ENCODE measurements at regions of chr20 and their contacts with region 1.

Region 1: DNA sequence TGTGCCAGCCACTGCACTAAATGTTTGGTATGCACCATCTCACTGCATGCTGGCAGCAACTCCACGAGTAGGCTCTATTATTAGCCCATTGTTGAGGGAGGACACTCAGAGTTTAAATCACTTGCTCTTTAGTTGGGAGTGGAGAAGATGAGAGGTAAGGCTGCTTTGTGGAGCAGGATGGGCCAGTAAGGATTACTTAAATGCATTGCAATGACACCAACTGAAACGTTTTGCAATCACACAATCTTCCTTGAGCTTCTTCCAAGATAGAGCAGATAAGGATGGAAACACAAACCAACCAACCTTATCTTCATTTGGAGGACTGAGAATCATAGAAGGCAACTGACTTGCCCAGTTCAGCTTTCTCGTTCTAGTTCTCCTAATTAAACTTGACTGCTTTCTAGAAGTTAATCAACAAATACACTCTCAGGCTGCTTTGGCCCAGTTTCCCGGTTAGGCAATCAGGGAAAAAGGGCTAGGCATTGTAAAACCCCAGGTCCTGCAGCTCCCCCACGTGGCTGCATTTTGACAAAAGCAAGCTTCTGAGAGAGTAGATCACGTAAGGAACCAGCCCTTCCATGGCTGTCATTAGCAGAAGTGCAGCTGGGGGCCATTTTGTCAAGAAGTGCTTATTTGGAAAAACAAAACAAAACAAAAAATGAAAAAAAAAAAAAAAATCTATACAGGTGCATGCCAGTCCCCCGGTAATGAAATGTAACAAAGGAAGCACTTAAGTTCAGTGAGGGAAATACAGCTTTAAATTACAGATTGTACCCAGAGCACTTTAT is 130.6 kb downstream of the BCAS1 start:
- DNase-seq: peak; percentile 91 to 97 (median 92)
- ATAC-seq: peak; percentile 90 to 95 (median 93)
- H3K4me3 ChIP-seq: peak overlapping the region in 6 of 12 donors; percentile 13 to 31 (median 20)
- H3K27ac ChIP-seq: peak overlapping the region in 11 of 12 donors; percentile 68 to 91 (median 77)
- H3K4me1 ChIP-seq: peaks cover 0 to 76% (median 36%) of the 10 kb centered on the region in 12 donors
- H3K27me3 ChIP-seq: no peaks in the 10 kb centered on the region
- CTCF ChIP-seq: peak; percentile 62 to 86 (median 82)
- POLR2A ChIP-seq: no peak

Region 2: DNA sequence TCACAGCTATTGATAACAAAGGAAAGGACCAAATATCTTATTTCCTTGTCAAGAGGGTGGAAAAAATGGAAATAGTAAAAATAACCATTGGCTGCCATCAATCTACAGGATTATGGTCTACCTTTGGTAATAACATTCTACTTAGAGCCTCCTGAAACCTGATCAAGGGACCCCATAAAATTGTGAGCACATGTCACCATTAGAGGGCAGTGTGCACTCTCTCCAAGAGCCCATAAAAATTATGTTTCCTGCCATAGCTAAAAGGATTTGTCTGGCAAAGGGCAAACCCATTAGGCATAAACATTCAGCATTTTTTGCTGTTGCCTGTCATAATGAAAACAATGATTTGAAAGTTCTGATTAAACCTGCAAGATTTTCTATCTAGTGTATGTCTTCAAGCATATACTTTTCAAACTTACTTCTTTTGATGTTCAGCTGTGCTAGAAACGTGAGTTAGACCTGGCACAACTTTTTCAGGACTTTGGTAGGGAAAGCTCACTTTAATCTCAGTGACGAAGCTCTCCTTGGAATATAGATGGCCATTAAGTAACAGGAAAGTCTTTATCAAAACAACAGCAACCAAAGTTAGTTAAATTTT is 1627.5 kb before region 1 on chr20:
- intact Hi-C with region 1: loop called in 1 of 10 experiments (anchors 10 kb)
- DNase-seq: peak in 2 of 5 donors; percentile 25 to 29
- ATAC-seq: peak in 3 of 4 donors; percentile 56 to 67 (median 64)
- H3K4me3 ChIP-seq: no peak overlapping the region
- H3K27ac ChIP-seq: no peak overlapping the region
- H3K4me1 ChIP-seq: peaks cover 0 to 9% (median 0%) of the 10 kb centered on the region in 12 donors
- H3K27me3 ChIP-seq: peaks cover 0 to 7% (median 0%) of the 10 kb centered on the region in 9 donors
- CTCF ChIP-seq: peak; percentile 55 to 84 (median 71)
- POLR2A ChIP-seq: no peak

Region 3: GRCh38 chr20:53413186-53413631 is 526.6 kb before region 1 on chr20:
- intact Hi-C with region 1: loop called in 1 of 10 experiments (anchors 10 kb)
- DNase-seq: peak in 1 of 5 donors; percentile 66
- ATAC-seq: peak in 1 of 4 donors; percentile 11
- H3K4me3 ChIP-seq: no peak overlapping the region
- H3K27ac ChIP-seq: no peak overlapping the region
- H3K4me1 ChIP-seq: peaks cover 0 to 17% (median 6%) of the 10 kb centered on the region in 12 donors
- H3K27me3 ChIP-seq: no peaks in the 10 kb centered on the region
- CTCF ChIP-seq: peak in 2 of 12 donors; percentile 9 to 11
- POLR2A ChIP-seq: no peak

Region 4: GRCh38 chr20:53738039-53738944 is 201.5 kb before region 1 on chr20:
- intact Hi-C with region 1: loop called in 1 of 10 experiments (anchors 10 kb)
- DNase-seq: peak; percentile 55 to 73 (median 68)
- ATAC-seq: peak; percentile 59 to 88 (median 86)
- H3K4me3 ChIP-seq: peak overlapping the region in 9 of 12 donors; percentile 0 to 29 (median 12)
- H3K27ac ChIP-seq: peak overlapping the region in 11 of 12 donors; percentile 47 to 82 (median 67)
- H3K4me1 ChIP-seq: peaks cover 3 to 64% (median 40%) of the 10 kb centered on the region in 12 donors
- H3K27me3 ChIP-seq: no peaks in the 10 kb centered on the region
- CTCF ChIP-seq: no peak
- POLR2A ChIP-seq: no peak

Region 5: GRCh38 chr20:53828682-53829254 is 111.0 kb before region 1 on chr20:
- intact Hi-C with region 1: no loop called
- DNase-seq: peak in 3 of 5 donors; percentile 29 to 53 (median 39)
- ATAC-seq: peak; percentile 74 to 88 (median 84)
- H3K4me3 ChIP-seq: peak overlapping the region in 10 of 12 donors; percentile 13 to 45 (median 32)
- H3K27ac ChIP-seq: peak overlapping the region; percentile 74 to 93 (median 86)
- H3K4me1 ChIP-seq: peaks cover 0 to 48% (median 13%) of the 10 kb centered on the region in 12 donors
- H3K27me3 ChIP-seq: no peaks in the 10 kb centered on the region
- CTCF ChIP-seq: peak in 3 of 12 donors; percentile 26 to 35 (median 27)
- POLR2A ChIP-seq: no peak

Region 6: DNA sequence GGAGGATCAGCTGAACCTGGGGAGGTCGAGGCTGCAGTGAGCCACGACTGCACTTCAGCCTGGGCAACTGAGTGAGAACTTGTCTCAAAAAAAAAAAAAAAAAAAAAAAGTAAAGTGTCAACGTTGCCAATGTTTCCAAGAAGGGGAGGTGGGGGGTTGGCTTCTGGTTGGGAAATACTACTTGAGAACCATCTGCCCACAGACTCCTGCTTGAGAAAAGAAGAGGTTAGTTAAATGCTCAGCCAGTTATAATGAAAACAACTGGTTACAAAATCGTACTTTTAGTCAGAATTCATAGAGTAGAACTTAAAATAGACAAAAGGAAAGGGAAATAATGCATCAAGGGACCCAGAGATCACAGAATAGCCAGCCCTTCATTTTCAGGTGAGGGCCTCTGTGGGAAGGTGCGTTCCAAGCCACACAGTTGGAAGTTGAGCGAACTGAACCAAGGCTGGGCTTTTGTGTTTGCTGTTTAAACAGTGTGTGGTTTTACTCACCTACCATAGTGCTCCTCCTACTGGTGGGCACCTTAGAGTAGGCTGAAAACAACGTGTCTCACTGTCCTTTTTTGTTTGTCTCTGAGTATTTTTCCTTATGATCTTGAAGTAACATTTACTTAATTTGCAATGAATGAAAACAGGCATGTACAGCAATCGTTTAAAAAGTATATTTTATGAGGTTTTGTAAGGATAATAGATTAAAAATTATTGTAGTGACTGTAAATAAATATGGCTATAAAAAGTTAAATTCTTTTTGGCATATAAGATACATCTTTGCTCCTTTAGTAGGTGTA is 70.1 kb before region 1 on chr20:
- intact Hi-C with region 1: loop called in 1 of 10 experiments (anchors 5 kb)
- DNase-seq: peak in 4 of 5 donors; percentile 54 to 67 (median 61)
- ATAC-seq: peak; percentile 72 to 94 (median 87)
- H3K4me3 ChIP-seq: peak overlapping the region in 1 of 12 donors; percentile 13
- H3K27ac ChIP-seq: peak overlapping the region in 4 of 12 donors; percentile 20 to 65 (median 52)
- H3K4me1 ChIP-seq: peaks cover 0 to 62% (median 22%) of the 10 kb centered on the region in 12 donors
- H3K27me3 ChIP-seq: no peaks in the 10 kb centered on the region
- CTCF ChIP-seq: peak; percentile 60 to 86 (median 76)
- POLR2A ChIP-seq: no peak

Region 7: GRCh38 chr20:53915446-53916172 is 24.2 kb before region 1 on chr20:
- intact Hi-C with region 1: loop called in 5 of 10 experiments (anchors 1 to 2 kb)
- DNase-seq: peak; percentile 94 to 97 (median 95)
- ATAC-seq: peak; percentile 86 to 92 (median 90)
- H3K4me3 ChIP-seq: peak overlapping the region; percentile 53 to 80 (median 66)
- H3K27ac ChIP-seq: peak overlapping the region; percentile 79 to 94 (median 88)
- H3K4me1 ChIP-seq: peaks cover 0 to 46% (median 29%) of the 10 kb centered on the region in 12 donors
- H3K27me3 ChIP-seq: no peaks in the 10 kb centered on the region
- CTCF ChIP-seq: peak; percentile 79 to 98 (median 88)
- POLR2A ChIP-seq: no peak

Region 8: DNA sequence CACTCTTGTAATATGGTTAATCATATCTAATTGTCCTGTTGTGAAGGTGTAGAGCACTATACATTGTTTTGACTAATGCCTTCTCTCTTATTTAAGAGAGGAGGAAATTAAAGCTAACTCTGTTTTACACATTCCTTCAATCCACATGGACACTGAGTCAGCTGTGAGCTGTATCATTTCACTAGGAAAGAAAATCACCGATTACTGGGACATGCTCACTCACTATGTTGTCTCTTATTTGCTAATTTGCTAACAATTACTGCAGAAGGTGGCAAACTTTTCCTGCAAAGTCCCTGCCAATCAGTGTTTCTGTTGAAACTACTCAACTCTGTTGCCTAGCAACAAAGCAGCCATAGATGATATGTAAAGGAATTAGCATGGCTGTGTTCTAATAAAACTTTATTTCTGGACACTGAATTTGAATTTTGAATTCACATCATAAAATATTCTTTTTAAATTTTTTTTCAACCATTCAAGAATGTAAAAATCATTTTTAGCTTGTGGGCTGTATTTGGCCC is 32.5 kb after region 1 on chr20:
- intact Hi-C with region 1: no loop called
- DNase-seq: no peak
- ATAC-seq: no peak
- H3K4me3 ChIP-seq: no peak overlapping the region
- H3K27ac ChIP-seq: no peak overlapping the region
- H3K4me1 ChIP-seq: no peaks in the 10 kb centered on the region
- H3K27me3 ChIP-seq: no peaks in the 10 kb centered on the region
- CTCF ChIP-seq: no peak
- POLR2A ChIP-seq: no peak

Region 9: GRCh38 chr20:53984356-53985149 is 44.8 kb after region 1 on chr20:
- intact Hi-C with region 1: no loop called
- DNase-seq: peak in 1 of 5 donors; percentile 29
- ATAC-seq: no peak
- H3K4me3 ChIP-seq: no peak overlapping the region
- H3K27ac ChIP-seq: no peak overlapping the region
- H3K4me1 ChIP-seq: no peaks in the 10 kb centered on the region
- H3K27me3 ChIP-seq: peaks cover 0 to 16% (median 0%) of the 10 kb centered on the region in 9 donors
- CTCF ChIP-seq: no peak
- POLR2A ChIP-seq: no peak

Region 10: DNA sequence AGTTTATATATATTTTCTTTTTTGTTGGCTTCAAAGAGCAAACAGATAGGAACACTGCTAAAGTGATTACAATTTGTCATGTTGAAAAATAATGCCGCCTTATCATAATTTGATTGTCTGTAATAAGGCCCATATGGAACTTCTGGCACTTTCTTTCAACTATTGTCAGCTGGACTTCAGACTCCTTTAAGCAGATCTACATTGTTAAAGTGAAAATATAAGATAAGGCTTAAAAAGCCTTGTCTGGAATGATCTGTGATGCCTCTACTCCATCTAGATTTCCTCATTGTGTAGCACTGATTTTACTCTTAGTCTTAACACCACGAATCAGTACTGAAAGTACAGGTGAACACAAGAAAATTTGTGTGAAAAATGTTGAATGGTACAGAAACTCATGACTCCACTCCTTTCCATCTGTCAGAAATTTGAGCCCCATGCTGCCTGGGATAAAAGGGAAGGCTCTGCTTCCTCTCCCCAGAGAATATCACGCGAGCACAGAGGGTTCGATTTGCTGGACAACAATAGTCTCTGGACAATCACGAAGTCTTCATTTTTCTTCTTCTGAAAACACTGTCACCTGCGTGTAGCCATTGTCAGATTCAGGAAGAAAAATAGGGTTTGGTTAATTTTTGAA is 74.6 kb after region 1 on chr20:
- intact Hi-C with region 1: no loop called
- DNase-seq: no peak
- ATAC-seq: no peak
- H3K4me3 ChIP-seq: no peak overlapping the region
- H3K27ac ChIP-seq: no peak overlapping the region
- H3K4me1 ChIP-seq: peaks cover 0 to 14% (median 0%) of the 10 kb centered on the region in 12 donors
- H3K27me3 ChIP-seq: no peaks in the 10 kb centered on the region
- CTCF ChIP-seq: no peak
- POLR2A ChIP-seq: no peak

Region 11: DNA sequence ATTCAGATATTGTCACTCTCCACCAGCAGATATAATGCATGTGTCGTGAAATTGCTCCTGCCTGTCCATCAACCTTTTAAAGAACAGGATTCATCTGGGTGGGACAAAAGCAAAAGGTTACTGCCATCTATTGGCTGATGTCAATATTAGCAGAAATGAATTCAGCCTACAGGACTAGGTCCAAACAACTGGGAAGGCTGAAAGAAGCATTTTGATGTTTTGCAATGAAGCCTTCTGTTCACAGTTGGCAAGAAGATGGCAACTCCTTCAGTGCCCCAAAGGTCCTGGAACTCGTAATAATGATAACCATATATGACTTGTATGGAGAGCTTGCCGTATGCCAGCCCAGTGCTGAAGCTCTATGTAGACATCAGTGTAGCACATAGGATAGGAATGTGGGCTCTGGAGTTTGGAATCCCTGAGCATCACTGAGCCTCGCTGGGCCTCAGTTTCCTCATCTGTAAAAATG is 123.1 kb after region 1 on chr20:
- intact Hi-C with region 1: loop called in 2 of 10 experiments (anchors 5 to 10 kb)
- DNase-seq: no peak
- ATAC-seq: peak in 2 of 4 donors; percentile 66 to 74
- H3K4me3 ChIP-seq: no peak overlapping the region
- H3K27ac ChIP-seq: no peak overlapping the region
- H3K4me1 ChIP-seq: peaks cover 0 to 9% (median 0%) of the 10 kb centered on the region in 12 donors
- H3K27me3 ChIP-seq: peaks cover 0 to 12% (median 0%) of the 10 kb centered on the region in 9 donors
- CTCF ChIP-seq: peak; percentile 27 to 71 (median 62)
- POLR2A ChIP-seq: no peak

Measured in heart left ventricle (tissue), 16 donors.